ENCODE measurements at regions of chr2 and their contacts with region 1.

Region 1: DNA sequence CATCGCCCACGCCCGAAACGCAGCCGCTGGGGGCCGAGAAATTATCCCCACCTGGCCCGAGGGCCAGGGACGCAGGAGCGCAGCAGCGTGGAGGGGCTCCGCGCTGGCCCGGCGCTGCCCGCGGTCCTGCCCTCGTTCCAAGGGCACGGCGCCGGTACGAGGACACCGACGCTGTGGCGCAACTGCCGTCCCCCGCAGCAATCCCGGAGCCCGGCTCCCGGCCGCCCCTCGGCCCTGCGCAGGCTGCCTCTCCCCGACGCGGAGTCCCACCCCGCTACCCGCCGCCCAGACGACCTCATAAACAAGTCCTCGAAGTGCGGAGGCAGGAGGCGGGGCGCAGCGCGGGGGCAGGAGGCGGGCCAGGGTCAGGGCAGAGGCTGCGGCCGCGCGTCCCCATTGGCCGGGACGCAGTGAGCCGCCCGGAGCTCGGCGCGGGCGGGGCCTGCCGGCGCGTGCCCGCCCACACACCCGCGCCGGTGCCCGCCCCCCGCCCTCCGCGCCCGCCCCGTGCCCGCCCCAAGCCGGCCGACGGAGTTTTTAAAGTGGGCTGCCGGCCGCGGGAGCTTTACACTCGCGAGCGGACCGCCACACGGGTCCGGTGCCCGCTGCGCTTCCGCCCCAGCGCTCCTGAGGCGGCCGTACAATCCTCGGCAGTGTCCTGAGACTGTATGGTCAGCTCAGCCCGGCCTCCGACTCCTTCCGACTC is at the start of gene EPAS1:
- DNase-seq: peak; percentile 83
- H3K4me3 Mint-ChIP-seq: peak within 1 kb of the TSS; percentile 87
- H3K27ac Mint-ChIP-seq: peak within 1 kb of the TSS; percentile 79
- H3K4me1 Mint-ChIP-seq: peaks cover 26% of the 10 kb centered on the region
- H3K27me3 Mint-ChIP-seq: peaks cover 64% of the 10 kb centered on the region
- total RNA-seq, gene EPAS1: 13.7 and 22.9 TPM in 2 replicates

Region 2: GRCh38 chr2:46010925-46011490 is 286.0 kb before region 1 on chr2:
- intact Hi-C with region 1: loop called (anchors 2 kb)
- DNase-seq: no peak
- H3K4me3 Mint-ChIP-seq: no peak overlapping the region
- H3K27ac Mint-ChIP-seq: no peak overlapping the region
- H3K4me1 Mint-ChIP-seq: peaks cover 13% of the 10 kb centered on the region
- H3K27me3 Mint-ChIP-seq: no peaks in the 10 kb centered on the region

Region 3: DNA sequence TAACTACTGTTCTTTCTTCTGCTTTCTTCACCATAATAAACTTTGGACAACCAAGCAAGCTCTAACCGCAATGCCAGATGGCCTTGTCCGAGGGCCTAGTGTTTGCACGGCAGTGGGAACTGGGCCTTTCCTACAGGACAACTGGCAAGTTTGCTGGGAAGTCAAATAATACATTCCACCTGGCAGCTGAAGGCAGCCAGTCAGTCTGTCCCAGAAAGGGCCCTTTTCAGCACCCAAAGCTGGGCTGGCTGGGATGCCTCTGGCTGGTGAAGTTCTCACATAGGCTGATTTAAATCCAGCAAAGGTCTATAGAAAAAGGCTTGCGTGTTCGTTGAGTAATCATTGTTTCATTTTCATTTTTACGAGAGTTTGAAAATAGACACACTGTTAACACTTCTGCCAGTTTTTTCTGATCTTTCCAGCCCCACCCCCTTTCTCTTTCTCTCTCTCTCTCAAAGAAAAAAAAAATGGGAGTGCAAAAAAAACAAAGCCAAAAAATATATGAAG is 109.8 kb before region 1 on chr2:
- intact Hi-C with region 1: loop called (anchors 2 kb)
- DNase-seq: peak; percentile 19
- H3K4me3 Mint-ChIP-seq: peak overlapping the region; percentile 65
- H3K27ac Mint-ChIP-seq: peak overlapping the region; percentile 87
- H3K4me1 Mint-ChIP-seq: peaks cover 24% of the 10 kb centered on the region
- H3K27me3 Mint-ChIP-seq: no peaks in the 10 kb centered on the region

Region 4: GRCh38 chr2:46239847-46240181 is 57.2 kb before region 1 on chr2:
- intact Hi-C with region 1: loop called (anchors 2 kb)
- DNase-seq: peak; percentile 61
- H3K4me3 Mint-ChIP-seq: peak overlapping the region; percentile 6
- H3K27ac Mint-ChIP-seq: peak overlapping the region; percentile 89
- H3K4me1 Mint-ChIP-seq: peaks cover 49% of the 10 kb centered on the region
- H3K27me3 Mint-ChIP-seq: peaks cover 3% of the 10 kb centered on the region

Region 5: DNA sequence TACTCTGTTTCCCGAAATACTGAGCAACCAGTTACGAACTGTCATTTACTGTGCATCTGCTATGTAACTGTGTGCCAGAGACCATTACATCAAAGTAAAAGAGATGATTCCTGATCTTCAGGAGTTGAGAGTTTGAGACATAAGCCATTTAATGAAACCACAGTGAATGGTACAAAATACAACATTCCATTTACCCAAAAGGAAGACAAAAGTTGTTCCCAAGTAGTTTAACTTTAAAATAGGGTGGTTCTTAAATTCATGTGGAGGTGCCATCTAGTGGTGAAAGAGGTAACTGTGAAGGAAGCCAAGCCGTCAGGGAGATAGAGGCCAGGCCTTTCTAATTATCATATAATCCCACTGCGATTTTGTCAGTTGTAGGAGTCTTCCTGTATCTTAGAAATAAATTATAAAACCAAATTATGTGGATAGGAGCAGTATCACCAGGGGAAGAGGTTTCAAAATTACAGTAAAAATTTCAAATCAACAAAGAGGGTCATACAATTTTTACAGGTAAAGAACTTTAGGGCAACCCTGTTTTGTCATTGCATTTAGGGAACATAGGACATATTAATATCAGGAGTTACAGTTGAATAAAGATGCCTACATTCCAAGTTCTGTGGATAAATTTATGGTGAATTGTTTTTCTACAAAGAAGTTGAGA is 67.9 kb after region 1 on chr2:
- intact Hi-C with region 1: loop called (anchors 1 kb)
- DNase-seq: no peak
- H3K4me3 Mint-ChIP-seq: no peak overlapping the region
- H3K27ac Mint-ChIP-seq: no peak overlapping the region
- H3K4me1 Mint-ChIP-seq: peaks cover 49% of the 10 kb centered on the region
- H3K27me3 Mint-ChIP-seq: peaks cover 6% of the 10 kb centered on the region